ENCODE measurements at regions of chr17 and their contacts with region 1.

Region 1: DNA sequence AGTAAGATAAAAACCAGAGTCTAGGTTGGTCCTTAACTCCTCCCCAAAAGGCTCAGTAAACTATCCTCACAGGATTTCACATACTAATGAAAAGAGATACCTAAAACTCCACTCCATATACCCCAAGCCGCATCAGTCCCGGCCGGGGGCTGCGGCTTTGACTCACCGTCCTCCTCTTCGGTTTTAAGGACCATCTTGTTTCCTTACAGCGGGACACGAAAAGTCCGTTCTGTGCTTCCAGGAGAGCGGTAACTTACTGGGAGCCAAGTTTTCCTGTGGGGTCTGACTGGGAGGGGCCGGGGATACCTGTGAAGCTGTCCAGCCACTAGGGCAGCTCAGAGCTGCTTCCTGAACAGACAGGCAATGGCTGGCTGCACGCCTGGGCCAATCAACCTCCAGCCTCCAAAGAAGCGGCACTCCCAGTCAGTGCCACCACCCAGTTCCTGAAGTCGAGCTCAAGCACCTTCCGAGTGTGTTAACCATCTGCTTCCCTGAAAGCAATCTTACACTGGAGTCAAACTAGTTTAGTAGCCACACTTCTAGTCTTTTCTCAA is 45.5 kb downstream of the CYTH1 start:
- DNase-seq: peak; percentile 91
- H3K4me3 ChIP-seq: peak overlapping the region; percentile 82
- H3K27ac ChIP-seq: peak overlapping the region; percentile 90
- H3K4me1 ChIP-seq: peaks cover 88% of the 10 kb centered on the region
- CTCF ChIP-seq: 0 out of 2 replicates have a peak, but pooled peaks have one; percentile 33

Region 2: DNA sequence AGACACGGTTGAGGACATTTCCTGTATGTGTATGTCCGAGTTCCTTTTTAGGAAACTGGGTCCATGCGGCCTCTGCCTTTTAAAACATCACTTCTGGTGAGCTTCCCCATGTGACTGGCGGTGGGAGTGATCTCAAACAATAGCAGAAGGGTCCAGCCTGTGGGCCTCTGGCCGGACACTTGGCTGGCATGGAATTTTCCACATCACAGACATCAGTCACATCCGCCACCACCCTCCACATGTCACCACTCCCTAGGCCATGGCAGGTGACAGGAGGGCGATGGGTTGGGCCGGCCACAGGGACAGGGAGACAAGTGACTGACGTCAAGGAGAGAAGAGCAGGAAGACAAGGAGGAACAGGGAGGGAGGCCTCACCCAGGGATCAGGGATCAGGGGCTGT is 243.2 kb before region 1 on chr17:
- CTCF ChIA-PET with region 1: no interaction called
- POLR2A ChIA-PET with region 1: no interaction called
- intact Hi-C with region 1: no loop called
- DNase-seq: no peak
- H3K4me3 ChIP-seq: no peak overlapping the region
- H3K27ac ChIP-seq: no peak overlapping the region
- H3K4me1 ChIP-seq: no peaks in the 10 kb centered on the region
- CTCF ChIP-seq: no peak

Region 3: GRCh38 chr17:78708510-78708973 is 28.1 kb before region 1 on chr17:
- CTCF ChIA-PET with region 1: interaction called, 5 read pairs
- POLR2A ChIA-PET with region 1: interaction called, 127 read pairs
- intact Hi-C with region 1: no loop called
- DNase-seq: peak; percentile 90
- H3K4me3 ChIP-seq: peak overlapping the region; percentile 41
- H3K27ac ChIP-seq: peak overlapping the region; percentile 90
- H3K4me1 ChIP-seq: peaks cover 84% of the 10 kb centered on the region
- CTCF ChIP-seq: peak; percentile 100

Region 4: DNA sequence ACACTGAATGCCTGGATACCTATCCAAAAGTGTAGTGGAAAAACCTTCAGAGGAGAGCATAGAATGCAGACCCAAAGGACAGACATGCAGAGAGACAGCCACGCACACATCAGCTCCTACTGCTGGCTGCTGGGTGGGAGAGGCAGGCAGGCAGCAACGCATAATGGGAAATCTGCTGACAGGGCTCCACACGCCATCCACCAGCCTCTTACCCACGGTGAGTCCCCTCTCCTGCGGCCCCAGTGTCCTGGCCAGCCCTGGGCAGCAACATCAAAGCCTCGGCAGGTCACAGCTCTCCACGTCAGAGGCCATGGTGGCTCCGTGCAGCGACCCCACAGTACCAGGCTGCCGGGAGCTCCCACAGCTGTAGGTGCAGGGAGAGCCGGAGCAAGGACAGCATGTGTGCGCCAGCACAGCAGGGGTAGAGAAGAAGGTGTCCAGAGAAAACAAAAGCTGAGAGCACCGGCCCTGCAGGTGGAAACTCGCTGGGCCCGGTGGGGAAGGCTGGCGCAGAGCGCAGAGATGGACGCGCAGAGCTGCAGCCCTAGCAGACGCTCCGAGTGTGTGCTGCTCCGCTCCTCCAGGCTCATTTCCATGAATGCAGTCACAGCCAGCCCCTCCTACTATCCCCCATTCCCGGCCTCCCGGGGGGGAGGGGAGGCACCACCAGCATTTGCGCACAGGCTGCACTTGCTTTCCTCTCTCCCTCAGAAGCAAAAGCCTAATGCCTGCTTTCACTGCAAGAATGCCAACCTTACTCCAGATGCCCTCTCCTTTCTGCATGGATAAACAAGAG is 13.4 kb before region 1 on chr17:
- CTCF ChIA-PET with region 1: interaction called, 8 read pairs
- POLR2A ChIA-PET with region 1: interaction called, 127 read pairs
- intact Hi-C with region 1: loop called (anchors 1 kb)
- DNase-seq: no peak
- H3K4me3 ChIP-seq: peak overlapping the region; percentile 52
- H3K27ac ChIP-seq: peak overlapping the region; percentile 88
- H3K4me1 ChIP-seq: peaks cover 100% of the 10 kb centered on the region
- CTCF ChIP-seq: no peak

Region 5: GRCh38 chr17:78774956-78775571 is 38.5 kb after region 1 on chr17:
- CTCF ChIA-PET with region 1: no interaction called
- POLR2A ChIA-PET with region 1: interaction called, 16 read pairs
- intact Hi-C with region 1: loop called (anchors 2 kb)
- DNase-seq: peak; percentile 60
- H3K4me3 ChIP-seq: peak overlapping the region; percentile 67
- H3K27ac ChIP-seq: peak overlapping the region; percentile 82
- H3K4me1 ChIP-seq: peaks cover 65% of the 10 kb centered on the region
- CTCF ChIP-seq: no peak

Region 6: DNA sequence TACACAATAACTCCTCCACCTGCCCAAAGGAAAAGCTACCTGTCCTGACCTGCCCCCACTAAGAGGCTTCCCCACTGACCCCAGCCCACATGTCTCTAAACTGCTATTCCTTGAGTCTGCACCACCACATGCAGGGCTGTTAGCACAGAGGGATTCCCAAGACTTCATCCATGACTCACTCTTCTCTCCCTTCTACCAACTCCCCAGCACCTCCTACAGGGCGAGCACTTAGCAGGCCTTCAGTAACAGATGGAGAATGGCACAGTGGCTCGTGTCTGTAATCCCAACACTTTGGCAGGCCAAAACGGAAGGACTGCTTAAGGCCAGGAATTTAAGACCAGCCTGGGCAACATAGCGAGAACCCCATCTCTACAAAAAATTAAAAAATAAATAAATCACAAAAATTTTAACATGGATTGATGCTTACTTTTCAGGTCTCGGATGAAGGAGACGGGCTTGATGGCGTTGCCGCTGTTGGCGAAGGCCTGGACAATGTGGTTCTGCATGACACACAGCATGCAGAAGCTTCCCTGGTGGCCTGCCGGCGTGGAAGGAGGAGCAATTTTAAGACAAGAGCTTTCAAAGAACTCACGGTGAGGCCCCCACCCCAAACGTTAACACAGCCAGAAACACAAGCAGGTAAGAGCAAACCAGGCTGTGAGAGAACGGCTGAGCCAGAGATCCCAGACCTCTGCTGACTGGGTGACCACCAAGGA is 92.0 kb after region 1 on chr17:
- CTCF ChIA-PET with region 1: no interaction called
- POLR2A ChIA-PET with region 1: no interaction called
- intact Hi-C with region 1: no loop called
- DNase-seq: no peak
- H3K4me3 ChIP-seq: no peak overlapping the region
- H3K27ac ChIP-seq: no peak overlapping the region
- H3K4me1 ChIP-seq: no peaks in the 10 kb centered on the region
- CTCF ChIP-seq: peak; percentile 44